Right cardiac atrium (tissue), 5 donors: ENCODE measurements at regions of chr10 and their contacts with region 1.

Region 1: GRCh38 chr10:22988581-22989360 is 60.9 kb downstream of the ARMC3 start:
- DNase-seq: peak in 2 of 3 donors; percentile 22 to 57
- ATAC-seq: peak; percentile 75 to 79
- H3K4me3 ChIP-seq: no peak overlapping the region
- H3K27ac ChIP-seq: no peak overlapping the region
- H3K4me1 ChIP-seq: no peaks in the 10 kb centered on the region
- H3K27me3 ChIP-seq: no peaks in the 10 kb centered on the region

Region 2: GRCh38 chr10:22010973-22011408 is 977.8 kb before region 1 on chr10:
- intact Hi-C with region 1: loop called in 3 of 4 experiments (anchors 5 to 10 kb)
- DNase-seq: no peak
- ATAC-seq: no peak
- H3K4me3 ChIP-seq: no peak overlapping the region
- H3K27ac ChIP-seq: no peak overlapping the region
- H3K4me1 ChIP-seq: no peaks in the 10 kb centered on the region
- H3K27me3 ChIP-seq: no peaks in the 10 kb centered on the region

Region 3: GRCh38 chr10:22251751-22252223 is 737.0 kb before region 1 on chr10:
- intact Hi-C with region 1: loop called in 1 of 4 experiments (anchors 10 kb)
- DNase-seq: peak; percentile 73 to 85 (median 84)
- ATAC-seq: peak; percentile 48 to 71
- H3K4me3 ChIP-seq: peak overlapping the region; percentile 87
- H3K27ac ChIP-seq: peak overlapping the region; percentile 98
- H3K4me1 ChIP-seq: no peaks in the 10 kb centered on the region
- H3K27me3 ChIP-seq: no peaks in the 10 kb centered on the region

Region 4: DNA sequence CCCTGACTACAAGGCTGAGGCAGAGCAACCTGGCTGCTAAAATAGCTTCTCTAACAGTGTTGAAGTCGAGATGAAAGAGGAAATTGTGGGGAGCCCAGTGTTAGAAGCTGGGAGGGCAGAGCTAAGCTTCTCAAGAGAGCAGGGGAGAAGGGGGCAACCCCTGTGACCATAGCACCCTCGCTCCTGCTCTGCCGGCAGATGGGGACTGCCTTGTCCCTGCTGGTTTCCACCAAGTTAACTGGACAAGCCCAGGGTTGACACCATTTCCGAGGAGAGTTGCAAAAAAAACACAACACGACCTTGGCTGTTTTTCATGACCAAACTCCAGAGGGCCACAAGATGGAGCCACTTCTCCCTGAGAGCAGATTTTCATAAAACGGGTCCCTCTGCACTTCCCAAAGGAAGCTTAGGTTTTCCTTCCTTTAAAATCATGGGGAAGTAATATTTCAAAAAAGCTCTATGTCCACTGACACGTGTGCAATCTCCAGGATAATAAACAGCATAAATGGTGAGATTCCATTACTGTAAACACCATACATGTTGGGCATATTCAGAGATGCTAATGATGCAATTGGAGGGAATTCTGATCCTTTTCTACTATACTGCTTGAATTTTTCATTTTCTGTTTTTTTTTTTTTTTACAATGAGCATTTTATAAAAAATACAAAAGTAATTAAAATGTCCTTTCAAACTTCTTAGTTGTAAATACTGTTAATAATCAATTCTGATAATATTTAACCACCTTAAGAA is 414.8 kb before region 1 on chr10:
- intact Hi-C with region 1: loop called in 3 of 4 experiments (anchors 5 to 10 kb)
- DNase-seq: no peak
- ATAC-seq: no peak
- H3K4me3 ChIP-seq: no peak overlapping the region
- H3K27ac ChIP-seq: no peak overlapping the region
- H3K4me1 ChIP-seq: no peaks in the 10 kb centered on the region
- H3K27me3 ChIP-seq: no peaks in the 10 kb centered on the region

Region 5: DNA sequence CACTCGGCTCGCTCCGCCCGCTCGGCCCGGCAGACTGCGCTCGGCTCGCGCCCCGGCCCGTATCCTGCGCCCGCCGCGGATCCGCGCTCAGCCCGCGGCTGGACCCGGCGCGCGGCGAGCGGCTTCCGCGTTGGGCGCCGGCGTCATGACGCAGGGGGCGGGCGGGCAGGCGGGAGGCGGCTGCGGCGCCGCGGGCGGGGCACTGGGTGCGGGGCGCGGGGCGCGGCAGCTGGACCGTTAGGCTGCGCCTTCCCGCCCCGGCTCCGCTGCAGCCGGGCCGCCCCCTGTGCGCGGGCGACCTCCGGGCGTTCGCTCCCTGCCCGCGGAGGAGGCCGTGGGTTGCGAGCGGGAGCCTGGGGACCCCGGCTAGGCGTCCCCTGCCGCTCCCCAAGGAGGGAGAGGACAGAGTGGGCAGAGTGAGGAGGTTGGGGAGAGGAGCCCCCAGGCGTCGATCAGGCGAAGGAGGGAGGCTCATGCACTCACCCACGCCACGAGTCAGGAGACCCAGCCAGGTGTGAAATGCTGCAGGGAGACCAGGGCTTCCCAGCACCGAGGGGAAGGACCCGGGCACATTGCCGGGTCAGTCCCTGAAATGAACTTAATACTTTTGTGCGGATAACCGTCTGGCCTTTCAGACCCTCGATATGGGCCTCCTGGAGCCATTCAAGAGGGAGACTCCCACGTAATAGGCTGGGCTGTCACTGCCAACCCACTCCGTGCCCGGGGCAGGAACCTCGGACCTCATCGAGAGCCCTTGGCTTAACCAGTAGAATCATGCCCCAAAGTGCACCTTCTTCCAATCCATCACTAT is 274.1 kb before region 1 on chr10 and contains the start of gene PIP4K2A:
- intact Hi-C with region 1: loop called in 1 of 4 experiments (anchors 10 kb)
- DNase-seq: peak; percentile 80 to 93 (median 92)
- ATAC-seq: peak; percentile 89 to 90
- H3K4me3 ChIP-seq: peak within 1 kb of the TSS; percentile 98
- H3K27ac ChIP-seq: peak within 1 kb of the TSS; percentile 90
- H3K4me1 ChIP-seq: no peaks in the 10 kb centered on the region
- H3K27me3 ChIP-seq: no peaks in the 10 kb centered on the region
- total RNA-seq, gene PIP4K2A: 21.4 to 31.7 (median 24.5) TPM

Region 6: GRCh38 chr10:22900841-22901601 is 87.8 kb before region 1 on chr10:
- intact Hi-C with region 1: no loop called
- DNase-seq: peak; percentile 47 to 80 (median 67)
- ATAC-seq: peak; percentile 69 to 94
- H3K4me3 ChIP-seq: no peak overlapping the region
- H3K27ac ChIP-seq: no peak overlapping the region
- H3K4me1 ChIP-seq: no peaks in the 10 kb centered on the region
- H3K27me3 ChIP-seq: no peaks in the 10 kb centered on the region